CD4-positive, alpha-beta memory T cell (primary cell): ENCODE measurements at regions of chr3 and their contacts with region 1.

Region 1: DNA sequence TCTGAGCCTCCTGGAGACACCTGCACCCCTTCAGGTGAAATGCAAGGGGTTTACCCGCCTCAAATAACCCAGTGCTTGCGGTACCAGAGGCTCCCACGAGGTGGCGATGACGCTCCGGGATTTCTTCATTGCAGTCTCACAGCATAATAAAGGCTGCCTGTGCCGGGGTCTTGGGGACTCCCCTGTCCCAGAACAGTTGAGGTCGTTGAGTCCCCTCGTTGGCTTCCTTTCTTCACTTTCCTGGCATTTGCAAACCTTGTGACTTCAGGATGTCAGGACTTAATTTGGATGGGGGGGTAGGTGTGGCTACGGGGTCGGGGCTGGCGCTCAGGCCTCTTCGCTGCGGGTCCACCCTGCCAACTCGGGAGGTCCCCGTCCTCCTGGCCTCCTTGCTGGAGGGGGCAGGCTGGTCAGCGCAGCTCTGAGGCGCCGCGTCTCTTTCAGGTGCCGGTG is 1.3 kb downstream of the GNAT1 start:
- DNase-seq: peak; percentile 76 to 84 (median 82)
- H3K4me3 ChIP-seq: no peak overlapping the region
- H3K4me3 Mint-ChIP-seq: peak overlapping the region in 3 of 8 donors; percentile 9 to 70 (median 62)
- H3K27ac ChIP-seq: no peak overlapping the region
- H3K27ac Mint-ChIP-seq: peak overlapping the region in 3 of 7 donors; percentile 52 to 78 (median 60)
- H3K4me1 ChIP-seq: peaks cover 24% of the 10 kb centered on the region
- H3K4me1 Mint-ChIP-seq: peaks cover 5 to 18% (median 13%) of the 10 kb centered on the region in 4 donors
- H3K27me3 ChIP-seq: peaks cover 11% of the 10 kb centered on the region
- H3K27me3 Mint-ChIP-seq: peaks cover 4 to 15% of the 10 kb centered on the region in 2 donors

Region 2: GRCh38 chr3:50138266-50139200 is 54.2 kb before region 1 on chr3:
- CTCF ChIA-PET with region 1: no interaction called
- POLR2A ChIA-PET with region 1: no interaction called
- intact Hi-C with region 1: no loop called
- DNase-seq: no peak
- H3K4me3 ChIP-seq: no peak overlapping the region
- H3K4me3 Mint-ChIP-seq: no peak overlapping the region
- H3K27ac ChIP-seq: no peak overlapping the region
- H3K27ac Mint-ChIP-seq: peak overlapping the region in 3 of 7 donors; percentile 42 to 71 (median 56)
- H3K4me1 ChIP-seq: peaks cover 12% of the 10 kb centered on the region
- H3K4me1 Mint-ChIP-seq: peaks cover 2 to 12% (median 8%) of the 10 kb centered on the region in 4 donors
- H3K27me3 ChIP-seq: no peaks in the 10 kb centered on the region
- H3K27me3 Mint-ChIP-seq: peaks cover 0 to 2% of the 10 kb centered on the region in 2 donors

Region 3: DNA sequence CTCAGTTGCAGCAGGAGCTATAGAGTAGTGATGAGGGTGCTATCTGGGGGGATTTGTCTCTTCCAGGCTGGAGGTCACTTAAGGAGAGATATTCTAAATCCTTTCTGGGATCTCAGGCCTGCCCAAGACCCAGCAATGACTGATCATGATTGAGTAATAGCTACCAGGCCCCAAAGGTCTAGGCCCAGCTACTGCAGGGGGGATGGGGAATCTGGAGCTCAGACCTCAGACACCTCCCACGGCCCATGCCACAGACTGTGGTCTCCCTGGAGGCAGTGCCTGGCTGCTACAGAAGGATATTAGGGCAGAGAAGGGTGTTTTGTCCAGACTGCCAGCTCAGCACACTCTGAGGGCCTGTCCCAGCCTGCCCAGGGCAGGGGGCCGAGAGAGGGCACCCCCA is 19.2 kb after region 1 on chr3:
- CTCF ChIA-PET with region 1: interaction called, 23 read pairs
- POLR2A ChIA-PET with region 1: no interaction called
- intact Hi-C with region 1: no loop called
- DNase-seq: no peak
- H3K4me3 ChIP-seq: no peak overlapping the region
- H3K4me3 Mint-ChIP-seq: no peak overlapping the region
- H3K27ac ChIP-seq: no peak overlapping the region
- H3K27ac Mint-ChIP-seq: peak overlapping the region in 1 of 7 donors; percentile 4
- H3K4me1 ChIP-seq: no peaks in the 10 kb centered on the region
- H3K4me1 Mint-ChIP-seq: no peaks in the 10 kb centered on the region
- H3K27me3 ChIP-seq: no peaks in the 10 kb centered on the region
- H3K27me3 Mint-ChIP-seq: peaks cover 4 to 5% of the 10 kb centered on the region in 2 donors

Region 4: DNA sequence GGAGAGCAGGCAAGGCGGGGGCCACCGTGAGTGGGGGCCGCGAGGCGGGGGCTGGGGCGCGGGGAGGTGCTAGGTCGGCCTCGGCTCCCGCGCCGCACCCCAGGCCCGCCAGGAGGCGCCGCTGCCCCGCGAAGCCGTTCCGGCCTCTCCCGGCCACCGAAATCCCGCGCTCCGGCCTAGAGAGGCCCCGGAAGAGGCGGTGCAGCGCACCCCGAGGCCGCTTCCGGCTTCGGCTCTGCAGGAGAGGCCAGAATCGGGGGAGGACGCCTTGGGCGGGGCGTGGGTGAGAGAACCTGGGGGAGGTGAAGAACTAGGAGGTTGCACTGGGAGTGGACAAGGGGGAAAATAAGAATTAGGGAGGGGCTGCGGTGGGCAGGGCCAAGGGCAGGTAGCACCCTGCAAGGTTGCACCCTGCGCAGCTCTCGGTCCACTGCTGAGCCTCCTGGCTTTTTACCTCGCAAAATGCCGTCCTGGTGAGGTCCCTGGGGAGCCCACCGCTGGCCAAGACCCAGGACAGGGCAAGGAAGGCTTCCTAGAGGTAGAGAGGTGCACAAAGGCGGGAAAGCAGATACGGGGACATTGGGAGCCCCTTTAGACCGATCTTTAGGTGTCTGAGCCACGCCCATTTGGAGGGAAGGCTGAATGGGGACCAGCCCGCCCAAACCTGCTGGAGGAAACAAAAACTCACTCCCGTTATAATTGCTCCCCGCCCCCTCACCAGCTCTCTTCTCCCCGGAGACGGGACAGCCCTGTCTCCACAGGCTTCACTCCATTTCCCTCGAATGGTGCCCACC is 34.9 kb after region 1 on chr3:
- CTCF ChIA-PET with region 1: interaction called, 218 read pairs
- POLR2A ChIA-PET with region 1: interaction called, 47 read pairs
- intact Hi-C with region 1: loop called (anchors 1 kb)
- DNase-seq: peak; percentile 90 to 92 (median 91)
- H3K4me3 ChIP-seq: peak overlapping the region; percentile 79 to 87
- H3K4me3 Mint-ChIP-seq: peak overlapping the region; percentile 89 to 99 (median 94)
- H3K27ac ChIP-seq: peak overlapping the region; percentile 59
- H3K27ac Mint-ChIP-seq: peak overlapping the region; percentile 92 to 96 (median 95)
- H3K4me1 ChIP-seq: peaks cover 18% of the 10 kb centered on the region
- H3K4me1 Mint-ChIP-seq: peaks cover 15 to 39% (median 30%) of the 10 kb centered on the region in 4 donors
- H3K27me3 ChIP-seq: no peaks in the 10 kb centered on the region
- H3K27me3 Mint-ChIP-seq: peaks cover 0 to 2% of the 10 kb centered on the region in 2 donors

Region 5: DNA sequence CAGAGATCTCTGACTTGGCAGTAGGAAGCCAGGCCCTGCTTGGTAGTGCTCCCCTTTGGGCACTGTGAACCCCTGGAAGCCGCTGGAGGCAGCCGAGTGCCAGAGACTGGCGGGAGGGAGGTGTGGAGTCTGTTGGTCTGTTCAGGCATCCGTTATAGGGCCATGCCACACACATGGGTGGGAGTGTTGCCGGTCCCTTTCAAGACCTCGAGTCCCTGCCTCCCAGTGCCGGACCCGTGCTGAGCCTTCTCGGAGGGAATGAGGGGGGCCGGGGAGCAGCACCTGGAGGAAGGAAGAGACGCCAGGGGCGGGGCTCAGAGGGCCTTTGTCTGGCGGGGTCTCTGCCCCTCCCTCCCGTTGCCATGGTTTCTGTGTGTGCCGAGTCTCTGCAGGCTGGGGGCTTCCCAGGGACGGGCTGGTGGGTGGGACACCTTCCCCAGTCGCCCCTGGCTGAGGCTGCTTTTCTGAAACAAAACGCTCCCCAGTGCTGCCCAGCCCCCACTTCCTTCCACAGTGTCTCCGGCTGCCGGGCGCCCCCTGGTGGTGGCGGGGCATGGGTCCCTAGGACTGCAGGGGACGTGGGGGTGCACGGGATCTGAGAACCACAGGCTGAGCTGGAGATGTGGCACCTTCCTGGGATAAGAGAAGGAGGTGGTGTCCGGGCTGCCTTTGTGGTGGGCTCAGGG is 53.3 kb after region 1 on chr3:
- CTCF ChIA-PET with region 1: interaction called, 88 read pairs
- POLR2A ChIA-PET with region 1: interaction called, 10 read pairs
- intact Hi-C with region 1: loop called (anchors 1 kb)
- DNase-seq: peak; percentile 89 to 94 (median 92)
- H3K4me3 ChIP-seq: peak overlapping the region; percentile 24 to 44
- H3K4me3 Mint-ChIP-seq: peak overlapping the region; percentile 75 to 88 (median 80)
- H3K27ac ChIP-seq: peak overlapping the region; percentile 76
- H3K27ac Mint-ChIP-seq: peak overlapping the region; percentile 92 to 98 (median 95)
- H3K4me1 ChIP-seq: peaks cover 97% of the 10 kb centered on the region
- H3K4me1 Mint-ChIP-seq: peaks cover 44 to 89% (median 71%) of the 10 kb centered on the region in 4 donors
- H3K27me3 ChIP-seq: no peaks in the 10 kb centered on the region
- H3K27me3 Mint-ChIP-seq: no peaks in the 10 kb centered on the region

Region 6: DNA sequence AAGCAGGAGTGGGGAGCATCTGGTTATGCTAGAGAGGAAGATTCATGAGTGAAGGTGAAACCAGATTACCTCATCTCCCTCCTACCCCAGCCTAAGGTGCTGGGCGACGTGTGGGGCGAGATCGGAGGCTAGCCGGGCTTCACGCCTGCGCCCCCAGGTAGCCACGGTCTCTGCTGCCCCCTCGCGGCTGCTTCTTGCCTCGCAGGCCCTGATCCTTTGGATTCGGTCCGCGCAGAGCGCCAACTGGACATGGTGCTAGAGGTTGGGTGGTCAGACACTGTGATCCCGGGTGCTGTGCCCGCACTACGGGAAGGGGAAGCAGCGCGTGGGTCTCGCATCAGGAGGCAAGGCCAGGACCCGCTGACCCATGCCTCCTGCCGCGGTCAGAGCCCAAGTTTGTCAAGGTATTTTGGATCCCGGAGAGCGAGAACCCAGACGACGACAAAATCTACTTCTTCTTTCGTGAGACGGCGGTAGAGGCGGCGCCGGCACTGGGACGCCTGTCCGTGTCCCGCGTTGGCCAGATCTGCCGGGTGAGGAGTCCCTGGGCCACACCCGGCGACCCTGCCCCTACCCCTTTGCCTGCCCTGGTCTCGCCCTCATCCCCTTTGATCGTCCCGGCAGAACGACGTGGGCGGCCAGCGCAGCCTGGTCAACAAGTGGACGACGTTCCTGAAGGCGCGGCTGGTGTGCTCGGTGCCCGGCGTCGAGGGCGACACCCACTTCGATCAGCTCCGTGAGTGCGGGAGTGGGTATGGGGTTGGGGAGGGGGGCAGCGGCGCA is 80.4 kb after region 1 on chr3:
- CTCF ChIA-PET with region 1: interaction called, 40 read pairs
- POLR2A ChIA-PET with region 1: interaction called, 3 read pairs
- intact Hi-C with region 1: loop called (anchors 1 kb)
- DNase-seq: peak; percentile 73 to 83 (median 79)
- H3K4me3 ChIP-seq: no peak overlapping the region
- H3K4me3 Mint-ChIP-seq: peak overlapping the region; percentile 35 to 81 (median 74)
- H3K27ac ChIP-seq: no peak overlapping the region
- H3K27ac Mint-ChIP-seq: peak overlapping the region in 3 of 7 donors; percentile 9 to 88 (median 53)
- H3K4me1 ChIP-seq: peaks cover 35% of the 10 kb centered on the region
- H3K4me1 Mint-ChIP-seq: peaks cover 14 to 37% (median 25%) of the 10 kb centered on the region in 4 donors
- H3K27me3 ChIP-seq: peaks cover 35% of the 10 kb centered on the region
- H3K27me3 Mint-ChIP-seq: peaks cover 23 to 31% of the 10 kb centered on the region in 2 donors